ENCODE measurements at regions of chr1 and their contacts with region 1.

Region 1: GRCh38 chr1:183622884-183623785 is 12.4 kb downstream of the ARPC5 start:
- DNase-seq: peak in 7 of 10 donors; percentile 49 to 76 (median 63)
- H3K4me3 ChIP-seq: no peak overlapping the region
- H3K27ac ChIP-seq: peak overlapping the region in 42 of 59 donors; percentile 1 to 74 (median 52)
- H3K27me3 ChIP-seq: no peaks in the 10 kb centered on the region
- CTCF ChIP-seq: peak; percentile 22 to 86 (median 74)

Region 2: DNA sequence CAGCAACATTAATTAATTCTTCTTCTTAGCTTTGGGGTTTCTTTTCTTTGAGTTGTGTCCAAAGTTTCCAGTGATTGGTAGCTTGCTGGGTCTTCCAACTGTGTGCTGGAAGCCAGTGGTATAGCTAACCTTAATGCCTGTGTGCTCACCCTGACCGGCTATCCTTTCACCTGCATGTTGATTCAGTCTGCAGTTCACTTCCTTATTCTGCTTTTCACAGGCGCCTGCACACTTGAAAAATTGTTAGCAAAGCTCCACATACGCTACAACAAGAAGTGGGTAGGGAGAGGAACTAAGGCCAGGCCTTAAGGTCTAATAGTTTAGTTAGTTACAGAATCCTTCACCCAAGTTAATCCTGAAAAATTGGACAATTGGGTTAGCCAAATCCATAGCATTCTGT is 68.6 kb before region 1 on chr1:
- intact Hi-C with region 1: loop called (anchors 5 to 10 kb)
- DNase-seq: no peak
- H3K4me3 ChIP-seq: no peak overlapping the region
- H3K27ac ChIP-seq: peak overlapping the region in 3 of 59 donors; percentile 3 to 27 (median 8)
- H3K27me3 ChIP-seq: no peaks in the 10 kb centered on the region
- CTCF ChIP-seq: no peak